H1 (cell line): ENCODE measurements at regions of chr14 and their contacts with region 1.

Region 1: GRCh38 chr14:21014761-21015190 is 10.1 kb downstream of the NDRG2 start:
- DNase-seq: peak; percentile 82 to 93
- H3K4me3 ChIP-seq: no peak overlapping the region
- H3K27ac ChIP-seq: no peak overlapping the region
- H3K4me1 ChIP-seq: peaks cover 2 to 7% (median 5%) of the 10 kb centered on the region in 4 experiments; a peak in 5 of 7 replicates
- H3K27me3 ChIP-seq: no peaks in the 10 kb centered on the region; a peak in 1 of 7 replicates
- CTCF ChIP-seq: peak; percentile 47 to 96 (median 93)
- EP300 ChIP-seq: no peak
- POLR2A ChIP-seq: no peak
- RAD21 ChIP-seq: peak; percentile 98

Region 2: GRCh38 chr14:20667957-20668356 is 346.8 kb before region 1 on chr14:
- CTCF ChIA-PET with region 1: no interaction called
- POLR2A ChIA-PET with region 1: no interaction called
- DNase-seq: no peak
- H3K4me3 ChIP-seq: no peak overlapping the region
- H3K27ac ChIP-seq: no peak overlapping the region
- H3K4me1 ChIP-seq: no peaks in the 10 kb centered on the region; a peak in 2 of 7 replicates
- H3K27me3 ChIP-seq: peaks cover 0 to 3% (median 0%) of the 10 kb centered on the region in 4 experiments; a peak in 1 of 7 replicates
- CTCF ChIP-seq: no peak
- EP300 ChIP-seq: no peak
- POLR2A ChIP-seq: no peak
- RAD21 ChIP-seq: no peak

Region 3: GRCh38 chr14:20802341-20803084 is 212.3 kb before region 1 on chr14 and contains the start of gene RNASE1:
- CTCF ChIA-PET with region 1: no interaction called
- POLR2A ChIA-PET with region 1: no interaction called
- DNase-seq: no peak
- H3K4me3 ChIP-seq: no peak within 1 kb of the TSS
- H3K27ac ChIP-seq: no peak within 1 kb of the TSS
- H3K4me1 ChIP-seq: peaks cover 2 to 8% (median 6%) of the 10 kb centered on the region in 4 experiments; a peak in 3 of 7 replicates
- H3K27me3 ChIP-seq: no peaks in the 10 kb centered on the region
- CTCF ChIP-seq: no peak
- EP300 ChIP-seq: no peak
- POLR2A ChIP-seq: no peak
- RAD21 ChIP-seq: no peak
- total RNA-seq, gene RNASE1: 2.2 and 3.0 TPM in 2 replicates

Region 4: DNA sequence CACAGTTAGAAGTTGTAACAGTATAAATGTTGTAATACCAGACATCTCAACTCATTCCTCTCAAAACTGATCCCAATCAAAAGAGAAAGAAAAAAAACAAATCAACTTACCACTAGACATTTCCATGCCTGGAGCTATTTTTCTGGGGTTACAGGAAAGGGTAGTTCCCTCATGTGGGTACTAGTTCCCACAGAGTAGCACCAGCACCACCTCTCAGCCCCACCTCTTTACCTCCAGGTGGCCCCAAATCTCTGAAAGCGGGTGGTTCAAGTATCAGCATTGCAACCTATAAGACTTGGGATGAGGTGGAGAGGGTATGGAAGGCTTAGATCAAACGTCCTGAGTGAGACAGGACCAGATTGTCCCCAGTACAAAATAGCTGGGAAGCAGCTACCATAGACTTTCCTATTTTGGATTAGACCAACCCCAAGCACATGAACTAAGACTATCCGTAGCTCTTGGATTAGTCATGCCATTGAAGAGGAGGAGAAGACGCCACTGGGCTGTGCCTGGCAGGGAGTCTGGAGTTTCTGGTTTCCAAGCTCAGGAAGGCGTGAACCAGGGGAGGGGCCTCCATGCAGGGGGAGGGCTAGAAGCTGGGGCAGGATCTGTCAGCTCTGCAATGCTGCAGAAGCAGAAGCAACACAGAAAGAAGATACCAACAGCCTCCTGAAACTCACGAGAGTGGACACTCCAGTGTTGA is 16.0 kb before region 1 on chr14 and contains the start of gene SLC39A2:
- CTCF ChIA-PET with region 1: interaction called, 117 read pairs
- POLR2A ChIA-PET with region 1: interaction called, 6 read pairs
- DNase-seq: peak in 1 of 2 experiments; percentile 60
- H3K4me3 ChIP-seq: peak within 1 kb of the TSS in 1 of 4 experiments; percentile 9; a peak in 1 of 8 replicates
- H3K27ac ChIP-seq: no peak within 1 kb of the TSS
- H3K4me1 ChIP-seq: peaks cover 2 to 6% (median 5%) of the 10 kb centered on the region in 4 experiments; a peak in 5 of 7 replicates
- H3K27me3 ChIP-seq: no peaks in the 10 kb centered on the region
- CTCF ChIP-seq: no peak
- EP300 ChIP-seq: no peak
- POLR2A ChIP-seq: no peak
- RAD21 ChIP-seq: no peak
- total RNA-seq, gene SLC39A2: 0.22 TPM in 1 of 2 replicates, not detected in the other

Region 5: DNA sequence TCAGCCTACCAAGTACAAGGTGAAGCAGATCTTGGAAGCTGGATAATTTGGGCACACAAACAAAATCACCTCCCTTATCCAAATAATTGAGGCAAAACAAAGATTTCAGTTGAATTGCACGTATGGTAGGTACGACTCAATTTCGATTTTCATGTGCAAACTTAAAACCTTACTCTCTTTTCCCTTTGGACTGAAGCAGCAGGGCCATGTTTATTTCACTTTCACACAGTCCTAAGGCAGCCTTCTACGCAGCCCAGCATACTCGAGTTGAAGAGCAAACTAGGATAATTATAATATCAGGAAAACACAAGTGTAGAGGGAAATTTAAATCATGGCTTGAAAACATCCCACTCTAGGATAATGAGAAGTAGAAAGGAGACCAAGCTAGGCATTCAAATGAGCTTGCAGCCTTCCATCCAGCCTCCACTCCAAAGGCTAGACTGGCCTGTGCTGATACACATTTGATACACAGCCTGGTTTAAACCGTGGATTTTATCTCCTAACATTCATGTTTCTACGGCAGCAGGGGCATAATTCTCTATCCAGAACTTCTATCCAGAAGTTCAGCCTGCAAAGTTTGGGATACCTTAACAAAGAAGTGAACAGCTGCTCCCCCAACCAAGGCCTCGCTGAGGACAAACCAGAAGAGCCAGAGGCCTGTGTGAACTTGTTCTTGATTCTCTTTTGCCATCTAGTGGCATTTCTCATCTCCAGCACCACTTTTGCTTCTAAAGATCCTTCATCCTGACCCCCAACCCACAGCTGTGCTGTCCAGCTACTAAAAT is 25.0 kb after region 1 on chr14:
- CTCF ChIA-PET with region 1: interaction called, 371 read pairs
- POLR2A ChIA-PET with region 1: interaction called, 36 read pairs
- DNase-seq: peak in 1 of 2 experiments; percentile 53
- H3K4me3 ChIP-seq: no peak overlapping the region
- H3K27ac ChIP-seq: no peak overlapping the region
- H3K4me1 ChIP-seq: peaks cover 8 to 11% (median 10%) of the 10 kb centered on the region in 4 experiments; a peak in 6 of 7 replicates
- H3K27me3 ChIP-seq: peaks cover 0 to 3% (median 0%) of the 10 kb centered on the region in 4 experiments; a peak in 1 of 7 replicates
- CTCF ChIP-seq: peak in 2 of 3 experiments; percentile 68 to 83; a peak in 3 of 4 replicates
- EP300 ChIP-seq: no peak
- POLR2A ChIP-seq: no peak
- RAD21 ChIP-seq: peak; percentile 91

Region 6: GRCh38 chr14:21057803-21058675 is 43.3 kb after region 1 on chr14 and contains the start of gene RNASE8:
- CTCF ChIA-PET with region 1: interaction called, 18 read pairs
- POLR2A ChIA-PET with region 1: interaction called, 3 read pairs
- DNase-seq: no peak
- H3K4me3 ChIP-seq: no peak within 1 kb of the TSS
- H3K27ac ChIP-seq: no peak within 1 kb of the TSS
- H3K4me1 ChIP-seq: peaks cover 0 to 3% (median 0%) of the 10 kb centered on the region in 4 experiments; a peak in 2 of 7 replicates
- H3K27me3 ChIP-seq: no peaks in the 10 kb centered on the region; a peak in 1 of 7 replicates
- CTCF ChIP-seq: no peak
- EP300 ChIP-seq: no peak
- POLR2A ChIP-seq: no peak
- RAD21 ChIP-seq: no peak
- total RNA-seq, gene RNASE8: not detected in 2 replicates

Region 7: GRCh38 chr14:21078287-21078686 is 63.5 kb after region 1 on chr14:
- CTCF ChIA-PET with region 1: interaction called, 14 read pairs
- POLR2A ChIA-PET with region 1: interaction called, 5 read pairs
- DNase-seq: no peak
- H3K4me3 ChIP-seq: no peak overlapping the region
- H3K27ac ChIP-seq: no peak overlapping the region
- H3K4me1 ChIP-seq: no peaks in the 10 kb centered on the region
- H3K27me3 ChIP-seq: no peaks in the 10 kb centered on the region
- CTCF ChIP-seq: no peak
- EP300 ChIP-seq: no peak
- POLR2A ChIP-seq: no peak
- RAD21 ChIP-seq: no peak

Region 8: DNA sequence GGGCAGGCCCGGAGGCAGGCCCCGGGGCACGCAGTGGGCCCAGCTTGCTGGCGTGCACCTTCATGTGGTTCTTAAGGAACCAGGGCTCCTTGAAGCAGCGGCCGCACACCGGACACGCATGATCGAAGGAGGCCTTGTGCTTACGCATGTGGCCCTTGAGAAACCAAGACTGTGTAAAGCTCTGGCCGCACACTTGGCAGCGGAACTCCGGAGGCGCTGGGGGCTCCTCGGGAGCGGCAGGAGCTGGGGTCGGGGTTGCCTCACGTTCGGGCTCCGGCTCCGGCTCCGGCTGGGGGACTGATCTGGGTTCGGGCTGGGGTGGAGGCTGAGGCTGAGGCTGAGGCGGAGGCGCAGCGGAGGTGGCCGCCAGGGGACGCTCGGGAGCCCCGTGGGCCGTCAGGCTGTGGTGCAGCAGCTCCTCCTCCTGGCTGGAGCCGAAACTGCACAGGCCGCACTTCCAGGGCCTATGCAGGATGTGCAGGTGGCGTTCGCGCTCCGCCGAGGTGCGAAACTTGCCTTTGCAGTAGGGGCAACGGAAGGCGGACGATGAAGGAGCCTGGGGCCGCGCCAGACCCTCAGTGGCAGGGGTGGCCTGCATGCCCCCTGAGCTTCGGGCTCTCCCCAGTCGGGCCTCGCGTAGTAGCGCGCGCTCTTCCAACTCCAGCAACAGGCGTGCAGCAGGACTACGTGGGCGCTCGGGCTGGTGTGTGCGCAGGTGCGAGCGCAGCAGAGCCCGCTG is 77.7 kb after region 1 on chr14:
- CTCF ChIA-PET with region 1: interaction called, 138 read pairs
- POLR2A ChIA-PET with region 1: interaction called, 12 read pairs
- DNase-seq: peak in 1 of 2 experiments; percentile 99
- H3K4me3 ChIP-seq: no peak overlapping the region; a peak in 1 of 8 replicates
- H3K27ac ChIP-seq: peak overlapping the region; percentile 30
- H3K4me1 ChIP-seq: peaks cover 16 to 35% (median 24%) of the 10 kb centered on the region in 4 experiments
- H3K27me3 ChIP-seq: no peaks in the 10 kb centered on the region
- CTCF ChIP-seq: peak; percentile 100
- EP300 ChIP-seq: peak in 1 of 2 experiments; percentile 63; a peak in 1 of 3 replicates
- POLR2A ChIP-seq: peak in 1 of 2 experiments; percentile 68; a peak in 1 of 3 replicates
- RAD21 ChIP-seq: peak; percentile 87 to 92

Region 9: DNA sequence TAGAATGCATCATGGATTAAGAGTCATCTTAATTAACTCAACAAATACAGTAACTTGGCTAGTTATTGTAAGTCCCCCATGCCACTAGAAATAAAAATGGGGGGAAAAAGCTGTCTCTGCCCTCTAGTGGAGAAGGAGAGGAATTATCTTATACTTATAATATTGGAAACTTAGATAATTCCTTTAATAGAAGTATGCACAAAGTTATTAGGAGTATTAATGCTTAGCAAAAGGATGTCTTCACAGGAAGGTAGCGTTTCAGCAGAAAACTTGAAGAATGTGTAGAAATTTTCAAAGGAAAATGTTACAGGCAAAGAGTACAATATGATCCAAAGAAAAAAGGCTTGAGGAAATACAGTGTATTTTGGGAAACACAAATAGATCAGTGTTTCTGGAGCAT is 121.2 kb after region 1 on chr14:
- CTCF ChIA-PET with region 1: interaction called, 13 read pairs
- POLR2A ChIA-PET with region 1: no interaction called
- DNase-seq: no peak
- H3K4me3 ChIP-seq: no peak overlapping the region
- H3K27ac ChIP-seq: no peak overlapping the region
- H3K4me1 ChIP-seq: peaks cover 0 to 3% (median 0%) of the 10 kb centered on the region in 4 experiments; a peak in 5 of 7 replicates
- H3K27me3 ChIP-seq: peaks cover 0 to 1% (median 0%) of the 10 kb centered on the region in 4 experiments; a peak in 1 of 7 replicates
- CTCF ChIP-seq: peak in 2 of 3 experiments; percentile 19 to 55; a peak in 2 of 4 replicates
- EP300 ChIP-seq: no peak
- POLR2A ChIP-seq: no peak
- RAD21 ChIP-seq: peak in 1 of 2 experiments; percentile 26; a peak in 2 of 4 replicates

Region 10: GRCh38 chr14:21203470-21204166 is 188.8 kb after region 1 on chr14:
- CTCF ChIA-PET with region 1: no interaction called
- POLR2A ChIA-PET with region 1: no interaction called
- DNase-seq: no peak
- H3K4me3 ChIP-seq: no peak overlapping the region
- H3K27ac ChIP-seq: no peak overlapping the region
- H3K4me1 ChIP-seq: peaks cover 0 to 9% (median 2%) of the 10 kb centered on the region in 4 experiments; a peak in 5 of 7 replicates
- H3K27me3 ChIP-seq: no peaks in the 10 kb centered on the region
- CTCF ChIP-seq: no peak
- EP300 ChIP-seq: no peak
- POLR2A ChIP-seq: peak; percentile 7 to 57; a peak in 2 of 3 replicates
- RAD21 ChIP-seq: no peak